Testis (tissue), 5 donors: ENCODE measurements at regions of chr1 and their contacts with region 1.

Region 1: DNA sequence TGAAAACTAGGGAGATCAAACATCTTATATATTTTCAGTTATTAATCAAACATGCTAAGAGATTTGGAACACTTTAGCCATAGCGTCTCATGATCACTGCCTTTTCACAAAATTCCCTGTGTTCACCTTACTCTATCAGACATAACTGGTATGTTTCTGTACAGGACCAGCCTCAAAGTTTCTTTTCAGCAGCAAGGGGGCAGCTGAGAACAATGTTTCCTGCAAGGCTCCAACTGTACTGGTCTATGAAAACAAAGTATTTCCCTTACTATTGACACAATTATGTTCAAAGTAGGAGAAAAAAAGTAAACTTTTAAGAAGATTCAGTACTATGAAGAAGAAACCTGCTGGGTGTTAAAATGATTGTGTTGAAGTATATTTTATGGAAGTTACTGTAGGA is 98.5 kb downstream of the ATF6 start:
- DNase-seq: peak; percentile 64
- H3K4me3 ChIP-seq: no peak overlapping the region
- H3K27ac ChIP-seq: no peak overlapping the region
- H3K4me1 ChIP-seq: peaks cover 8% of the 10 kb centered on the region
- H3K27me3 ChIP-seq: no peaks in the 10 kb centered on the region
- CTCF ChIP-seq: peak; percentile 35 to 61 (median 57)
- POLR2A ChIP-seq: no peak

Region 2: GRCh38 chr1:162023547-162024501 is 159.2 kb after region 1 on chr1 and contains the start of gene OLFML2B:
- intact Hi-C with region 1: loop called (anchors 10 kb)
- DNase-seq: peak; percentile 86
- H3K4me3 ChIP-seq: peak within 1 kb of the TSS; percentile 57 to 65
- H3K27ac ChIP-seq: peak within 1 kb of the TSS; percentile 55 to 57
- H3K4me1 ChIP-seq: peaks cover 37% of the 10 kb centered on the region
- H3K27me3 ChIP-seq: no peaks in the 10 kb centered on the region
- CTCF ChIP-seq: peak in 2 of 3 experiments; percentile 23 to 42
- POLR2A ChIP-seq: no peak
- total RNA-seq, gene OLFML2B: 31.3 to 40.4 TPM

Region 3: DNA sequence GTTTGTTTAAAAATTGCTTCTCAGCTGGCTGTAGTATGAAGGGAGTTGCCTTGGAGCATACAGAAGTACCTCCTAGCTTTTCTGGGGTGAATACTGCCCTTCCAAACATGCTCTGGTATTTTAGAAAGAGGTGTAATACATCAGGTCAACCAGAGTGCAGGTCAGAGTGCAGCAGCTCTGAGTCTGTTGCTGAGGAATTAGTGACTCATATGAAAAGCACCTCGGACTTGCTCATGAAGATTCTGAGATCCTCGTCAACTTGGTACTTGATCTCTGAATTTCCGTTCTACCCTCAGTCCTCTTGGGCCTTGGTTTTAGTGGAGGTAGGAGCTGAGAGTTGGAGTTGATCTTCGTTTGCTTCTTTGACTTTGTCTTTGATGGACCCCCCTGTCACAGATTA is 272.2 kb after region 1 on chr1:
- intact Hi-C with region 1: no loop called
- DNase-seq: no peak
- H3K4me3 ChIP-seq: no peak overlapping the region
- H3K27ac ChIP-seq: no peak overlapping the region
- H3K4me1 ChIP-seq: no peaks in the 10 kb centered on the region
- H3K27me3 ChIP-seq: no peaks in the 10 kb centered on the region
- CTCF ChIP-seq: no peak
- POLR2A ChIP-seq: no peak